ENCODE measurements at regions of chr9 and their contacts with region 1.

Region 1: GRCh38 chr9:3361116-3361515 is 164.7 kb downstream of the RFX3 start:
- DNase-seq: no peak
- ATAC-seq: no peak
- H3K4me3 ChIP-seq: no peak overlapping the region
- H3K4me3 Mint-ChIP-seq: no peak overlapping the region
- H3K27ac ChIP-seq: no peak overlapping the region
- H3K27ac Mint-ChIP-seq: no peak overlapping the region
- H3K4me1 ChIP-seq: no peaks in the 10 kb centered on the region
- H3K4me1 Mint-ChIP-seq: peaks cover 11% of the 10 kb centered on the region
- H3K27me3 ChIP-seq: no peaks in the 10 kb centered on the region
- H3K27me3 Mint-ChIP-seq: no peaks in the 10 kb centered on the region
- CTCF ChIP-seq: no peak

Region 2: GRCh38 chr9:3043369-3043768 is 317.7 kb before region 1 on chr9:
- CTCF ChIA-PET with region 1: no interaction called
- POLR2A ChIA-PET with region 1: no interaction called
- intact Hi-C with region 1: no loop called
- DNase-seq: no peak
- ATAC-seq: no peak
- H3K4me3 ChIP-seq: no peak overlapping the region
- H3K4me3 Mint-ChIP-seq: no peak overlapping the region
- H3K27ac ChIP-seq: no peak overlapping the region
- H3K27ac Mint-ChIP-seq: no peak overlapping the region
- H3K4me1 ChIP-seq: no peaks in the 10 kb centered on the region
- H3K4me1 Mint-ChIP-seq: no peaks in the 10 kb centered on the region
- H3K27me3 ChIP-seq: no peaks in the 10 kb centered on the region
- H3K27me3 Mint-ChIP-seq: no peaks in the 10 kb centered on the region
- CTCF ChIP-seq: no peak

Region 3: DNA sequence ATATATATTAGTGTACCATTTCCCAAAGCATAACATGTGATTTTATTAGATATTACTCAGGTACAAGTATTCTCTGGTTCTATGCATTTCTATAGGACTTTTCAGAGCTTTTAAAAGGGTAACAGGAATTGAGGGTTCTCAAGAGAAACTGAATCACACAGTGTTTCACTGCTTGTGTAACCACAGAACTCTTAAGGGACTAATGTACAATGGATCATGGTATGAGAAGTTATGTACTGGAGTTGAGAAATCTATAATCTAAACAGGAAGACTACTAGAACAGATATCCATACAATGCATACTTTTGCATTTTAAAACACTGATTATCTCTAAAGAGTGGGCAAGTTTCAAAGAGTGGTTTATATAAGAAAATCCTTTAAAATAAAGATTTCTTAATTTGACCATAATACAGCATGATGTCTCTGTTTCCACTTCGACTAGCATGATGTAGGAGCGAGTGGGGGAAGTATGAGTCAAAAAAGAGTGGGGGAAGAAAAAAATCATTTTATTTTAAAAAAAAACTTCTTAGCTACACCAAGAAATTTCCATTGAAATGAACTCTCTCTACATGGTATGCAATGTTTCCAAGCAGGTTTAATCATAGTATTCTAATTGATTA is 18.8 kb before region 1 on chr9:
- CTCF ChIA-PET with region 1: no interaction called
- POLR2A ChIA-PET with region 1: no interaction called
- intact Hi-C with region 1: loop called in 1 of 2 experiments (anchors 1 kb)
- DNase-seq: no peak
- ATAC-seq: no peak
- H3K4me3 ChIP-seq: no peak overlapping the region
- H3K4me3 Mint-ChIP-seq: no peak overlapping the region
- H3K27ac ChIP-seq: no peak overlapping the region
- H3K27ac Mint-ChIP-seq: no peak overlapping the region
- H3K4me1 ChIP-seq: no peaks in the 10 kb centered on the region
- H3K4me1 Mint-ChIP-seq: peaks cover 5% of the 10 kb centered on the region
- H3K27me3 ChIP-seq: no peaks in the 10 kb centered on the region
- H3K27me3 Mint-ChIP-seq: no peaks in the 10 kb centered on the region
- CTCF ChIP-seq: no peak

Region 4: DNA sequence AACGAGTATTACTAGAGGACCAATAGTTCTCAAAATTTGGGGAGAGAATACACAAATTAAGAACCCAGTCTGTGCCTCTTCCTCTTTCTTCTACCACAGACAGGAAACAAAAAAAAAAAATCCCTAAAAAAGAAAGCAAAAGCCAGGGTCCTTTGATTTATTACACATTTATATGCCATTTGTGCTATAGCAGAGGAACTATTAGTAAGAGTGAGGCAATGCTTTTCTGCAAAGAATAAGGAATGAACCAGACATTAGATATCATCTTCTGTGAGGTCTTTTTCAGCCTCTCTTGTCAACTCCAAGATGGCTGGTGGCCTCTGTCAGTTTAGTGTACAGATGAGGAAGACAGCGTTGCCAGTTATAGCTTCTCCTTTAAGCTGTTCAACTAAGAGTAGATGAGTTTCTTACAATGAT is 37.1 kb after region 1 on chr9:
- CTCF ChIA-PET with region 1: no interaction called
- POLR2A ChIA-PET with region 1: no interaction called
- intact Hi-C with region 1: loop called in 1 of 2 experiments (anchors 10 kb)
- DNase-seq: peak in 2 of 9 experiments; percentile 13 to 41
- ATAC-seq: peak; percentile 79
- H3K4me3 ChIP-seq: peak overlapping the region in 1 of 2 experiments; percentile 20
- H3K4me3 Mint-ChIP-seq: peak overlapping the region; percentile 73
- H3K27ac ChIP-seq: peak overlapping the region; percentile 25 to 28
- H3K27ac Mint-ChIP-seq: peak overlapping the region; percentile 95
- H3K4me1 ChIP-seq: peaks cover 12% of the 10 kb centered on the region
- H3K4me1 Mint-ChIP-seq: peaks cover 24% of the 10 kb centered on the region
- H3K27me3 ChIP-seq: no peaks in the 10 kb centered on the region
- H3K27me3 Mint-ChIP-seq: no peaks in the 10 kb centered on the region
- CTCF ChIP-seq: no peak

Region 5: GRCh38 chr9:3467593-3468219 is 106.6 kb after region 1 on chr9:
- CTCF ChIA-PET with region 1: no interaction called
- POLR2A ChIA-PET with region 1: no interaction called
- intact Hi-C with region 1: no loop called
- DNase-seq: peak; percentile 13 to 80 (median 62)
- ATAC-seq: peak; percentile 99
- H3K4me3 ChIP-seq: no peak overlapping the region
- H3K4me3 Mint-ChIP-seq: no peak overlapping the region
- H3K27ac ChIP-seq: no peak overlapping the region
- H3K27ac Mint-ChIP-seq: no peak overlapping the region
- H3K4me1 ChIP-seq: peaks cover 4% of the 10 kb centered on the region
- H3K4me1 Mint-ChIP-seq: peaks cover 10% of the 10 kb centered on the region
- H3K27me3 ChIP-seq: no peaks in the 10 kb centered on the region
- H3K27me3 Mint-ChIP-seq: no peaks in the 10 kb centered on the region
- CTCF ChIP-seq: peak; percentile 87

Region 6: GRCh38 chr9:3698076-3698475 is 337.0 kb after region 1 on chr9:
- CTCF ChIA-PET with region 1: no interaction called
- POLR2A ChIA-PET with region 1: no interaction called
- intact Hi-C with region 1: no loop called
- DNase-seq: no peak
- ATAC-seq: no peak
- H3K4me3 ChIP-seq: no peak overlapping the region
- H3K4me3 Mint-ChIP-seq: no peak overlapping the region
- H3K27ac ChIP-seq: no peak overlapping the region
- H3K27ac Mint-ChIP-seq: no peak overlapping the region
- H3K4me1 ChIP-seq: no peaks in the 10 kb centered on the region
- H3K4me1 Mint-ChIP-seq: no peaks in the 10 kb centered on the region
- H3K27me3 ChIP-seq: no peaks in the 10 kb centered on the region
- H3K27me3 Mint-ChIP-seq: peaks cover 25% of the 10 kb centered on the region
- CTCF ChIP-seq: no peak

Region 7: GRCh38 chr9:4464911-4465513 is 1103.9 kb after region 1 on chr9:
- CTCF ChIA-PET with region 1: no interaction called
- POLR2A ChIA-PET with region 1: no interaction called
- intact Hi-C with region 1: no loop called
- DNase-seq: no peak
- ATAC-seq: no peak
- H3K4me3 ChIP-seq: no peak overlapping the region
- H3K4me3 Mint-ChIP-seq: no peak overlapping the region
- H3K27ac ChIP-seq: no peak overlapping the region
- H3K27ac Mint-ChIP-seq: no peak overlapping the region
- H3K4me1 ChIP-seq: no peaks in the 10 kb centered on the region
- H3K4me1 Mint-ChIP-seq: no peaks in the 10 kb centered on the region
- H3K27me3 ChIP-seq: no peaks in the 10 kb centered on the region
- H3K27me3 Mint-ChIP-seq: no peaks in the 10 kb centered on the region
- CTCF ChIP-seq: no peak

Measured in CD8-positive, alpha-beta T cell (primary cell).